Activated T-helper 2 cell treated with anti-CD3 and anti-CD28 coated beads, Interferon-gamma antibody, Interleukin-2, Interleukin-4, amounts not matched to agents 10 μg/mL and 5 μg/mL and 100 μg/mL, durations not matched to agents 14 hours and 24 hours and 36 hours (primary cell): ENCODE measurements at regions of chr4 and their contacts with region 1.

Region 1: GRCh38 chr4:40462326-40462725 is 127.2 kb downstream of the CHRNA9 start:
- DNase-seq: no peak
- H3K4me3 Mint-ChIP-seq: no peak overlapping the region
- H3K27ac Mint-ChIP-seq: peak overlapping the region; percentile 17
- H3K4me1 Mint-ChIP-seq: peaks cover 32% of the 10 kb centered on the region
- H3K27me3 Mint-ChIP-seq: no peaks in the 10 kb centered on the region

Region 2: GRCh38 chr4:40432504-40432903 is 29.8 kb before region 1 on chr4:
- intact Hi-C with region 1: loop called (anchors 2 kb)
- DNase-seq: no peak
- H3K4me3 Mint-ChIP-seq: no peak overlapping the region
- H3K27ac Mint-ChIP-seq: peak overlapping the region; percentile 70
- H3K4me1 Mint-ChIP-seq: peaks cover 42% of the 10 kb centered on the region
- H3K27me3 Mint-ChIP-seq: no peaks in the 10 kb centered on the region

Region 3: GRCh38 chr4:40473578-40474388 is 11.5 kb after region 1 on chr4:
- intact Hi-C with region 1: loop called (anchors 1 kb)
- DNase-seq: no peak
- H3K4me3 Mint-ChIP-seq: no peak overlapping the region
- H3K27ac Mint-ChIP-seq: no peak overlapping the region
- H3K4me1 Mint-ChIP-seq: peaks cover 35% of the 10 kb centered on the region
- H3K27me3 Mint-ChIP-seq: no peaks in the 10 kb centered on the region

Region 4: DNA sequence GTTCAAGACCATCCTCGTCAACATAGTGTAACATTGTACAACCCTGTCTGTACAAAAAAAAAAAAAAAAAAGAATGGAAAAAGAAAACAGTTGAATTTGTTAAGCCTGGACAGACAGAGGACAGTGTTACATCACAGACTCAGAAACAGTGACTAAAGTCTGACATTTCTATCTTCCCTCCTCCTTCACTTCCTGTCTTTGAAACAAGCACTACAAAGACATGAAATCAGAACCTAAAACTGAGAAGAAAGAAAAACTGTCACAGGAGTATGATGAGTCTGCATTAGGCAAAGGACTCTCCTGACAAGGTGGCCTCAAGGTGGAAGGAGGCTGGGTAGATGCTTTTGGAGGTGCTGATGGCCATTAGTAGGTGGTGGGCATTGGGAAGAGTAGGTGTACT is 40.6 kb after region 1 on chr4:
- intact Hi-C with region 1: loop called (anchors 5 kb)
- DNase-seq: no peak
- H3K4me3 Mint-ChIP-seq: peak overlapping the region; percentile 28
- H3K27ac Mint-ChIP-seq: peak overlapping the region; percentile 88
- H3K4me1 Mint-ChIP-seq: peaks cover 19% of the 10 kb centered on the region
- H3K27me3 Mint-ChIP-seq: no peaks in the 10 kb centered on the region